AG04449 (cell line): ENCODE measurements at regions of chr2 and their contacts with region 1.

Region 1: DNA sequence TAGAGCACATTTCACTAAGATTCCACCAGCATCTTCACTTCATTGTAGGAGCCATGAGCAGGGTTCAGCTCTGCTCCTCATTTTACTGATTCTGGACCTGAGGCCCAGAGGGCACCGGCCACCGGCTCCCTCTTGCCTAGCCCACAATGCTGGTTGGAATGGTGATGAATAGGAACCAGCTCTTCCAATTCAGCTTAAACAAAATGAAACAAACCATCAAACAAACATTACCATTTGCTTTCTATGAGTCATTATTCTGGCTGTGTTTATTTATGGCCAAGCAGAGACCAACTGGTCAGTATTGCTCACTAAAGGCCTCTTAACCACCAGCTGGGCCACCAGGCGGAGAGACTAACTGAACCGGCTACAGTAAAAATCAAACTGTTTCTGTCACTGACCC is 176.7 kb downstream of the MTX2 start:
- DNase-seq: peak; percentile 38
- H3K4me3 ChIP-seq: no peak overlapping the region
- CTCF ChIP-seq: no peak

Region 2: GRCh38 chr2:176461809-176462382 is 15.9 kb after region 1 on chr2:
- CTCF ChIA-PET with region 1: interaction called, 94 read pairs
- POLR2A ChIA-PET with region 1: no interaction called
- DNase-seq: no peak
- H3K4me3 ChIP-seq: no peak overlapping the region
- CTCF ChIP-seq: no peak

Region 3: DNA sequence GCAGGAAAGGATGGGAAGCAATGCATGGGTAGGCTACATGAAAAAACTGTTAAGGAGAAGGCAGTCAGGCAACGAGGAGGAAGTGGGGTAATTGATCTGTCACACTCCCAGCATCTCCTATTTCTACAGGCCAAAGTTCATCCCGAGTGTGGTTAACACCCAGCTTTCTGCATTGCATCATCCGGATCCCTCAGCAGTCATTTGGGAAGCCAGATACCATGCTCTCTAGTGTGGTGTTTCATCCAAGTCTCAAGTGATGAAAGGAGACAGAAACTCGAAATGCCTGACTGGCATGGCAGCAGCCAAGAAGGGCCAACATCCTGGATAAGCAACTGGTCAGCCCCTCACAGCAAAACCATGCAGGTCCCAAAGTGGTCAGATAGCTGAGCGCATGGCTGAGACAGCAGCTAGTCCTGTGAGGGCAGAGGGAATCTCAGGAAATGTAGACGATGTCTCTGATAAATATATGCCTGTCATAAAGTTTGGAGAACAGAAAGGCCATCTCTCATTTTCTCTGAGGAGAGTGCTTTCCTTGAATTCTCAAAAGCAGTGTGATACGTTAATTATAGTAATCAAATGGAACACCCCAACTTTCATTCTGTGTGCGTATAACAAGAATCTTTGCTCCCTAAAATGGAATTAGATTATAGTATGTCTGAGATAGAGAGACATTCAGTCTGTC is 741.8 kb after region 1 on chr2:
- CTCF ChIA-PET with region 1: no interaction called
- POLR2A ChIA-PET with region 1: no interaction called
- DNase-seq: no peak
- H3K4me3 ChIP-seq: no peak overlapping the region
- CTCF ChIP-seq: no peak